SK-N-SH (cell line): ENCODE measurements at regions of chr12 and their contacts with region 1.

Region 1: GRCh38 chr12:52327052-52327829 is 6.0 kb upstream of the KRT83 start:
- DNase-seq: peak; percentile 91
- H3K4me3 ChIP-seq: no peak overlapping the region
- H3K27ac ChIP-seq: no peak overlapping the region
- H3K4me1 ChIP-seq: peaks cover 0 to 6% of the 10 kb centered on the region in 2 experiments; a peak in 1 of 4 replicates
- H3K27me3 ChIP-seq: no peaks in the 10 kb centered on the region; the same call in 1 of the 2 replicates
- CTCF ChIP-seq: peak; percentile 93
- EP300 ChIP-seq: peak in 1 of 2 experiments; percentile 15; a peak in 1 of 4 replicates
- RAD21 ChIP-seq: peak; percentile 94

Region 2: GRCh38 chr12:52156736-52157565 is 170.3 kb before region 1 on chr12:
- CTCF ChIA-PET with region 1: interaction called, 110 read pairs
- POLR2A ChIA-PET with region 1: no interaction called
- DNase-seq: peak; percentile 92
- H3K4me3 ChIP-seq: no peak overlapping the region; a peak in 1 of 4 replicates
- H3K27ac ChIP-seq: no peak overlapping the region
- H3K4me1 ChIP-seq: no peaks in the 10 kb centered on the region
- H3K27me3 ChIP-seq: no peaks in the 10 kb centered on the region
- CTCF ChIP-seq: peak; percentile 98
- EP300 ChIP-seq: no peak
- RAD21 ChIP-seq: peak; percentile 99

Region 3: GRCh38 chr12:52221912-52222457 is 105.3 kb before region 1 on chr12:
- CTCF ChIA-PET with region 1: interaction called, 25 read pairs
- POLR2A ChIA-PET with region 1: no interaction called
- DNase-seq: no peak
- H3K4me3 ChIP-seq: no peak overlapping the region; a peak in 1 of 4 replicates
- H3K27ac ChIP-seq: peak overlapping the region in 1 of 2 experiments; percentile 33; a peak in 1 of 4 replicates
- H3K4me1 ChIP-seq: peaks cover 3 to 9% of the 10 kb centered on the region in 2 experiments; a peak in 2 of 4 replicates
- H3K27me3 ChIP-seq: no peaks in the 10 kb centered on the region
- CTCF ChIP-seq: peak; percentile 66
- EP300 ChIP-seq: no peak
- RAD21 ChIP-seq: peak; percentile 35

Region 4: DNA sequence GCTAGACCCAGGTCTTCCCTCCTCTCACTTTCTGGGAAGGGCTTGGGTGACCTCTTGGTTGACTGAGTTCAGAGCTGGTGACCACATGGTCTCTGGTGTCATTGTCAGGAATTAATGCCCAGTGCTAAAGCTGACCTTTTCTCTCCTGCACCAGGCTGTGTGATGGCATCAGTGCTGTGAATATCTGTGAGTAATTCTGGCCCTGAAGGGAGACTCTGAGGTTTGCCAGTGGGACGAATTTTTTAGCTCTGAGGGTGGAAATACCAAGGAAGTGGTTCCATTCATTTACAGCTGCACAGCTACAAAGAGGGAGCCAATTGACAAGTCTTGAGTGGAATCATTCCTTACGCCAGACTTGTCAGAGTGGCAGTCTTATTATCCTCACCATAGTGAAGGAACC is 59.0 kb before region 1 on chr12:
- CTCF ChIA-PET with region 1: interaction called, 13 read pairs
- POLR2A ChIA-PET with region 1: no interaction called
- DNase-seq: no peak
- H3K4me3 ChIP-seq: no peak overlapping the region
- H3K27ac ChIP-seq: peak overlapping the region in 1 of 2 experiments; percentile 38; a peak in 2 of 4 replicates
- H3K4me1 ChIP-seq: no peaks in the 10 kb centered on the region; a peak in 1 of 4 replicates
- H3K27me3 ChIP-seq: no peaks in the 10 kb centered on the region
- CTCF ChIP-seq: no peak
- EP300 ChIP-seq: no peak
- RAD21 ChIP-seq: no peak

Region 5: DNA sequence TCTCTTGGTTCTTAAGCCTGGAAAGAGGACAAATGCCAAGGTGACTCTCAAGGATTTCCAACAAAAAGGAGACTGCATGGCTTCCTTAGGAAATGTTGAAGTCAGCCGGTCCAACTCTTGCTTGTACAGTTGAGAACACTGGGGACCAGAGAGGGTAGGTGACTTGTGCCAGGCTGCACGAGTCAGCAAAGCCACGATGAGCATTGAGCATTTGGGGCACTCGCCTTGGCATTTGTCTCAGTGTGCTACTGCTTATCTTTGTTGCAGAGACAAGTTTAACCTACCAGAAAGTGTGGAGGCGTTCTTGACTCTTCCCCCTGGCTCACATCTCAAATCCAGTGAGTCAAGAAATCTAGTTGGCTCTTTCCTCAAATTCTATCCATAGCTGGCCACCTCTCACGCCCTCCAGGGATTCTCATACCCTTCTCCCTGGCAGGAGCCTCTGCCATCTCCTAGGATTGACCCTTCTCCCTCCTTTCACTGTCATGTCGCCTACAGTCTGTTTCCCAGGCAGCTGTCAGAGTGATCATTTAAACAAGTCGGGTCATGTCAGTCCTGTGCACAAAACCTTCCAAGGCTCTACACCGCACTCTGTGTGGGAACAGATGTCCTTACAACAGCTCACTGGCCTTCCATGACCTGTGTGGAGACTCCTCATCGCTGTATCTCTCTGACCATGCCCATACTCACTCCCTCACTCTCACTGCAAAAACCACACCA is 11.2 kb after region 1 on chr12:
- CTCF ChIA-PET with region 1: interaction called, 19 read pairs
- POLR2A ChIA-PET with region 1: no interaction called
- DNase-seq: no peak
- H3K4me3 ChIP-seq: no peak overlapping the region
- H3K27ac ChIP-seq: no peak overlapping the region
- H3K4me1 ChIP-seq: peaks cover 0 to 9% of the 10 kb centered on the region in 2 experiments; a peak in 2 of 4 replicates
- H3K27me3 ChIP-seq: peaks cover 32% of the 10 kb centered on the region
- CTCF ChIP-seq: no peak
- EP300 ChIP-seq: no peak
- RAD21 ChIP-seq: no peak